Ascending aorta (tissue), 2 donors: ENCODE measurements at regions of chr3 and their contacts with region 1.

Region 1: GRCh38 chr3:157493627-157494550 is 9.3 kb downstream of the VEPH1 start:
- DNase-seq: no peak
- H3K4me3 ChIP-seq: no peak overlapping the region
- H3K27ac ChIP-seq: no peak overlapping the region
- H3K4me1 ChIP-seq: no peaks in the 10 kb centered on the region
- H3K27me3 ChIP-seq: no peaks in the 10 kb centered on the region
- CTCF ChIP-seq: peak in 2 of 3 experiments; percentile 30 to 50

Region 2: DNA sequence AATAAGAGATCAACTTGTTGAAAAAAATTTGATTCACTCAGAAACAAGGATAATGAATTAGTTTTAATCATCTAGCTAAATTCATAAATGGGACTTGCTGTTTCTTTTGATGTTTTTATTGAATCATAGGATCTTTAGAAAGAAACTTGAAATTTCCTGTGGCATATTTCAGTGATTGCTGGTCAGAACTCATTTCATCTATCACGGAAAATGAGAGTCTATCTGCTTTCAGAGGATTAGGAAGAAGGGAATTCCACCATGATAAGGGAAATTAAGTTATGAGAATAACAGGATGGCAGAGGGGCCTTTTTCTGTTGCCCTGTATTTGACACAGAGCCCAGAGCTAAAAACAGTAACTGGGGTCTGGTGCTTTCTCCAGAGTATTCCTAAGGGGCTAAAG is 289.0 kb before region 1 on chr3:
- intact Hi-C with region 1: loop called (anchors 5 kb)
- DNase-seq: no peak
- H3K4me3 ChIP-seq: no peak overlapping the region
- H3K27ac ChIP-seq: no peak overlapping the region
- H3K4me1 ChIP-seq: no peaks in the 10 kb centered on the region
- H3K27me3 ChIP-seq: no peaks in the 10 kb centered on the region
- CTCF ChIP-seq: no peak